ENCODE measurements at regions of chr1 and their contacts with region 1.

Region 1: DNA sequence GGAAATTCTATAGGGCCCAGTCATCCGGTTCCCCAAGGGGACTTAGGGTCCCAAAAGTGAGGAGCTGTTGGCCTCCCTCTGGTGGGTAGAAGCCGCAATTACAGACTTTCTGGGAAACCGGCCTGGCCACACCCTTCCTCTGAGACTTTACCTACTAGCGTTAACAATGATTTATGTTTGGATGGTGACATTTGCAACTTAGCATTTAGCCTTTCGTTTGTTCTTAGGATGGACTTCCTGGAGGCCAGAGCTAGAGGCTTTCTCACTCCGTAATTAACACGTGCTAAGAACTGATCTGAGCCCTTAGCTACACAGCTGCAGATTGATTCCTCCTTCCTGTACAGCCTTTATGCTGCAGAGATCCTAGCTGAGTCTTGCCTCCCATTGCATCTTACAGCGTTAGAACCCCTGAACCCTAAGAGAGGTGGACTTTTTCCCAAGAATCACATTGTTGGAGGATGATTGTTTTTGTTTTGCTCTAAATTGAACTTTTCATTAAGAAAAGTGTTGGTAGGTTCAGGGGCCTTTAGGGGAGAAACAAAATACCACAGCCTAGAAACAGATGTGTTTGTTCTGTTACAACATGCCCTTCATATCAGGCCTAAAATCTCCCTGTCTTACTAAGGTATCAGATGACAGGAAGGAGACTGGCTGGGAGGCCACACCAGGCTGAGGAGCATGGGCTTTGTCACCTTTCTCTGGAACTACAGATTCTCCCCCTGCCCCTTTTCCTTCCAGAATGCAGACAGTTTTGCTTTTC is 2.0 kb downstream of the S100A11 start:
- DNase-seq: peak; percentile 83
- H3K4me3 Mint-ChIP-seq: peak overlapping the region; percentile 83
- H3K27ac Mint-ChIP-seq: peak overlapping the region; percentile 100
- H3K4me1 Mint-ChIP-seq: peaks cover 43% of the 10 kb centered on the region
- H3K27me3 Mint-ChIP-seq: no peaks in the 10 kb centered on the region

Region 2: DNA sequence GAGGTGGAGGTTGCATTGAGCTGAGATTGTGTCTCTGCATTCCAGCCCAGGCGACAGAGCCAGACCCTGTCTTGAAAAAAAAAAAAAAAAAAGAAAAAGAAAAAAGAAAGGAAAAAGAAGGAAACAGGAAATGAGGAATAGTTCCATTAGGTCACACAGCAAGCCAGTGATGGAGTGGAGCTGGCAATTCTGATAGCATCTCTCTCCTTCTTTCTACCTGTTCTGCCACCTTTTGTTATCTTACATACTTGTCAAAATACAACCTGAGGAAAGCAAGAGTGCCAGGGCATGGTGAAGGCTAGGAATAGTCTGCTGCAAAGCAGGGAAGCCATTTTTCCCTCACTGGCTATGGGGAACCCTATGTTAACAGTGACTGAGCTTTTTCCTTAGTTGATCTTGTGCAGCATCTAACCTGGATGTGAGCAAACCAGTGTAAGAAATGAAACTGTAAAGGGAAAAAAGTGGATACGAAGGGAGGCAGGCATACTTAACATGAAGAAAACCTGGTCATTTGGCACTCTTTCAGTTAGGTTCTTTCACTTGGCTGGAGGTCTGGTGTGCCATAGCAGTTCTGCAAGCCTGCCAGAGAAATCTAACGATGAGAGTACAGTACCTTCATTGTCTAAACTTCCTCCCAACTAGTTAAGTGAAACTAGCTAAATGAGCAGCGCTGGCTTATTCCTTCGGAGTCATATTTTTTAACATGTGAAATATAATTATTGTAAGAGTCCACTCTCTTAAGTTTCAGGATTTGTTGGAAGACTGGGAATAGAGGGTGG is 163.4 kb before region 1 on chr1:
- CTCF ChIA-PET with region 1: no interaction called
- POLR2A ChIA-PET with region 1: no interaction called
- intact Hi-C with region 1: no loop called
- DNase-seq: no peak
- H3K4me3 Mint-ChIP-seq: no peak overlapping the region
- H3K27ac Mint-ChIP-seq: no peak overlapping the region
- H3K4me1 Mint-ChIP-seq: peaks cover 20% of the 10 kb centered on the region
- H3K27me3 Mint-ChIP-seq: no peaks in the 10 kb centered on the region

Region 3: GRCh38 chr1:151968058-151968457 is 66.8 kb before region 1 on chr1:
- CTCF ChIA-PET with region 1: interaction called, 26 read pairs
- POLR2A ChIA-PET with region 1: no interaction called
- intact Hi-C with region 1: loop called (anchors 2 kb)
- DNase-seq: peak; percentile 55
- H3K4me3 Mint-ChIP-seq: no peak overlapping the region
- H3K27ac Mint-ChIP-seq: no peak overlapping the region
- H3K4me1 Mint-ChIP-seq: peaks cover 19% of the 10 kb centered on the region
- H3K27me3 Mint-ChIP-seq: no peaks in the 10 kb centered on the region

Region 4: DNA sequence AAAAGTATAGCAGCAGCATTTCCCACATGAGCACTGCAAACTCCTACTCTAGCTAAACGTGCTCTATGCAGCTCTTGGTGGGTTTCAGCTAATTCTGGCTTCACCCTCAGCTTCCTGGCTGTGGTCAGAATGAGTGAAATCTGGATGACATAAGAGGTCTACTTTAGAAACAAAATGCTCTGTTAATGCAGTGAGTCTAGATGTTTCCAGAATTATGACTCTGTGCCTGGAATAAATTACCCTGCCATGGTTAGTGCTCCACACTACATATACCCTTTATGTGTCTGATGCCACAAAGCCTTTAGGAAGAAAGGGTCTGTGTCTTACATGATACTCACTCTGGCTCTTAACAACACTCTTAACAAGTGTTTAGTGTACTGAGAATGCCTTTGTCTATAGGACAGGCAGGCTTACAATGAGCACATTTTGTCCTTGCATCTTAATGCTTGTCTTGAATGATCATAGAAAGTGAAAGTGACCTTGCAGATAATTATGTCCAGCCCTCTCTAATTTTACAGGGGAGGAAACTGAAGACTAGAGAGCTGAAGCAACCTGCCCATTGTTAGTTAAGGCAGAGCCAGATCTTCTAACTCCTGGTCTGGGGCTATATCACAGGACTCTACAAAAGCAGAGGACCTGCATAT is 50.4 kb before region 1 on chr1:
- CTCF ChIA-PET with region 1: interaction called, 9 read pairs
- POLR2A ChIA-PET with region 1: interaction called, 4 read pairs
- intact Hi-C with region 1: loop called (anchors 2 kb)
- DNase-seq: peak; percentile 74
- H3K4me3 Mint-ChIP-seq: peak overlapping the region; percentile 24
- H3K27ac Mint-ChIP-seq: peak overlapping the region; percentile 85
- H3K4me1 Mint-ChIP-seq: peaks cover 67% of the 10 kb centered on the region
- H3K27me3 Mint-ChIP-seq: no peaks in the 10 kb centered on the region

Region 5: GRCh38 chr1:151993654-151994496 is 41.0 kb before region 1 on chr1 and contains the start of gene S100A10:
- CTCF ChIA-PET with region 1: interaction called, 45 read pairs
- POLR2A ChIA-PET with region 1: interaction called, 3 read pairs
- intact Hi-C with region 1: loop called (anchors 2 kb)
- DNase-seq: peak; percentile 83
- H3K4me3 Mint-ChIP-seq: peak within 1 kb of the TSS; percentile 94
- H3K27ac Mint-ChIP-seq: peak within 1 kb of the TSS; percentile 90
- H3K4me1 Mint-ChIP-seq: peaks cover 47% of the 10 kb centered on the region
- H3K27me3 Mint-ChIP-seq: no peaks in the 10 kb centered on the region
- total RNA-seq, gene S100A10: 257 to 270 TPM

Region 6: DNA sequence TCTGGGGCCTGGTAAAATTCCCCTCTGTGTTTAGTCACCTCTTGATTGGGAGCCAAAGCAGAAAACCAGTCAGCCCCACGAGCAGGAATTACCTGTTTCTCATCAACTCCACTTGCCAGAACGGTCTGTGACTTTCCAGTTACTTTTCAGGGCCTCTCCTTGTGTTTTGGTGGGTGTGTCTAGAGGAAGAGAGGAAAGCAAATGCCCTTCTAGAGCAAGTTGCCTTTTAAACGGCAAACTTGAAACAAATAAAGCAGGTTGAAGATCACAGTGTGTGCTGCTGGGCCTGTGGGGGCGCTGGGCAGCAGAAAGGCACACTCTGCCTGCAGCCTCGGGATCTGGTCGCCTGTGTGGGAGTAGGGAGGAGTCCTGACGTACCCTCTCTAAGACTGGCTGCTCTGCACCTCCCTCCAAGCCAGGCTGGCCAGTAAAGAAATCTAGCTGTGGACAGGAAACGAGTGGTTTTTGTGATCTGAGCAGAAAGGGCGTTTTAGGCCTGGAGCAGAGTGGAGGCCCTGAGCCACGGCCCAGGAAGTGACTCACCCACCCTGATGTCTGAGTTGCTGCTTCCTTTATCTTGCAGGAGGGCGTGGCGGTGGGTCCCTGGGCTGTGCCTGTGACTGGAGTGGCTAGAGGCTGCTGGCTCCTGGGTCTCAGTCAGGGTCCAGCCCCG is 13.0 kb after region 1 on chr1:
- CTCF ChIA-PET with region 1: interaction called, 78 read pairs
- POLR2A ChIA-PET with region 1: interaction called, 62 read pairs
- intact Hi-C with region 1: loop called (anchors 1 kb)
- DNase-seq: peak; percentile 94
- H3K4me3 Mint-ChIP-seq: peak overlapping the region; percentile 72
- H3K27ac Mint-ChIP-seq: peak overlapping the region; percentile 99
- H3K4me1 Mint-ChIP-seq: peaks cover 29% of the 10 kb centered on the region
- H3K27me3 Mint-ChIP-seq: peaks cover 2% of the 10 kb centered on the region

Region 7: GRCh38 chr1:152198982-152199381 is 164.2 kb after region 1 on chr1:
- CTCF ChIA-PET with region 1: no interaction called
- POLR2A ChIA-PET with region 1: no interaction called
- intact Hi-C with region 1: no loop called
- DNase-seq: no peak
- H3K4me3 Mint-ChIP-seq: no peak overlapping the region
- H3K27ac Mint-ChIP-seq: no peak overlapping the region
- H3K4me1 Mint-ChIP-seq: no peaks in the 10 kb centered on the region
- H3K27me3 Mint-ChIP-seq: peaks cover 16% of the 10 kb centered on the region

Region 8: DNA sequence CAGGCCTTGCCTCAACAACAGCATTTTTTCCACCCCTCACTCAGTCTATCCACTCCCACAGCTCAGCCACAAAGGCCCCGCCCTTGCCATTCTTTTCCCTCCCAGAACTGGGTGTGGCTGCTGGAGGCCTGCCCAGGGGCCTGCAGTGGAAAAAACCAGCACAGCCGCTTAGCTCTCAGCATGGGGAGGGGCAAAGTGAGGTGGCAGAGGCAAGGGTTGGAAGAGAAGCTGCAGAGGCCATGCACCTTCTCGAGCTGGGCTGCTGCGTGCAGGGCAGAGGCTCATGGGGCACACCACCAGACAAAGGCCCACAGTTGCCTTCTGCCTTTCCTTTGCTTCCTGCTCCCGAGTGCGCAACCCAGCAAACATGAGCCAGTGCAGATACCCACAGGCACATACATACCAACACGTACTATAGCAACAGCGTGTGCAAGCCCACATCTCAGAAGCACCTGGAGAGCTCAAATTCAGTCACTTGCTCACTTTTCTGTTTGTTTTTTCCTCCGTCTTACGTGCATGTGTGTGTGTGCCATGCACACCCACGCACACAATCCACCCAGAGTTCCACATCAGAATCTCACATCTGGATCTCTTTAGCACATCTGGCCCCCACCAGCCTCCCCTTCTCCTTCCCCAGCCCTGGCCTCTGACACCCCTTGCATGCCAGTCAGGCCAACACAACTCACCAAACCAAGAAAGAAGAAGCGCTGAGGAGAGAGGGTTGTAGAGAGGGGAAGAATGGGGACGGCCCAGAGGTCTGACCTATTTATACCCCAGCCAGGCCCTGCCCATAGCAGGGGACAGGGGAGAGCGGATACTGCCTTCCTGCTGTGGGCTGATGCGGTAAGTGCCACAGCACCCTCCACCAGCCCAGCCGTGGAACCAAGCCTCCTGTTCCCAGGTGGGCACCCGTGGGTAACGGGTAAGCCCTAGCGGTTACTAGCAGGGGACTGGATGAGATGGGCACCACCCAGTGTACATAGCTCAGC is 1510.5 kb after region 1 on chr1 and contains the start of gene S100A4:
- CTCF ChIA-PET with region 1: no interaction called
- POLR2A ChIA-PET with region 1: no interaction called
- intact Hi-C with region 1: loop called (anchors 10 kb)
- DNase-seq: peak; percentile 98
- H3K4me3 Mint-ChIP-seq: peak within 1 kb of the TSS; percentile 92
- H3K27ac Mint-ChIP-seq: peak within 1 kb of the TSS; percentile 99
- H3K4me1 Mint-ChIP-seq: peaks cover 74% of the 10 kb centered on the region
- H3K27me3 Mint-ChIP-seq: no peaks in the 10 kb centered on the region
- total RNA-seq, gene S100A4: 352 to 382 TPM

Measured in activated CD4-positive, alpha-beta memory T cell treated with anti-CD3 and anti-CD28 coated beads for 36 hours (primary cell).